ENCODE measurements at regions of chr10 and their contacts with region 1.

Region 1: GRCh38 chr10:70363971-70364771 is 18.3 kb downstream of the LRRC20 start:
- DNase-seq: peak; percentile 63 to 92 (median 85)
- ATAC-seq: peak; percentile 99
- H3K4me3 ChIP-seq: no peak overlapping the region
- H3K4me3 Mint-ChIP-seq: no peak overlapping the region
- H3K27ac ChIP-seq: no peak overlapping the region
- H3K27ac Mint-ChIP-seq: no peak overlapping the region
- H3K4me1 ChIP-seq: peaks cover 10% of the 10 kb centered on the region
- H3K4me1 Mint-ChIP-seq: peaks cover 8% of the 10 kb centered on the region
- H3K27me3 ChIP-seq: no peaks in the 10 kb centered on the region
- H3K27me3 Mint-ChIP-seq: peaks cover 2% of the 10 kb centered on the region
- CTCF ChIP-seq: peak; percentile 87

Region 2: GRCh38 chr10:70115948-70116682 is 248.1 kb before region 1 on chr10:
- CTCF ChIA-PET with region 1: interaction called, 22 read pairs
- POLR2A ChIA-PET with region 1: no interaction called
- intact Hi-C with region 1: loop called (anchors 1 to 10 kb)
- DNase-seq: peak; percentile 25 to 76 (median 63)
- ATAC-seq: peak; percentile 89
- H3K4me3 ChIP-seq: no peak overlapping the region
- H3K4me3 Mint-ChIP-seq: no peak overlapping the region
- H3K27ac ChIP-seq: no peak overlapping the region
- H3K27ac Mint-ChIP-seq: no peak overlapping the region
- H3K4me1 ChIP-seq: peaks cover 9% of the 10 kb centered on the region
- H3K4me1 Mint-ChIP-seq: peaks cover 7% of the 10 kb centered on the region
- H3K27me3 ChIP-seq: no peaks in the 10 kb centered on the region
- H3K27me3 Mint-ChIP-seq: no peaks in the 10 kb centered on the region
- CTCF ChIP-seq: peak; percentile 93

Region 3: GRCh38 chr10:70221030-70221429 is 143.1 kb before region 1 on chr10:
- CTCF ChIA-PET with region 1: interaction called, 370 read pairs
- POLR2A ChIA-PET with region 1: interaction called, 14 read pairs
- intact Hi-C with region 1: loop called (anchors 1 kb)
- DNase-seq: peak in 1 of 9 experiments; percentile 9
- ATAC-seq: no peak
- H3K4me3 ChIP-seq: no peak overlapping the region
- H3K4me3 Mint-ChIP-seq: no peak overlapping the region
- H3K27ac ChIP-seq: peak overlapping the region in 1 of 2 experiments; percentile 36
- H3K27ac Mint-ChIP-seq: peak overlapping the region; percentile 55
- H3K4me1 ChIP-seq: peaks cover 4% of the 10 kb centered on the region
- H3K4me1 Mint-ChIP-seq: peaks cover 14% of the 10 kb centered on the region
- H3K27me3 ChIP-seq: no peaks in the 10 kb centered on the region
- H3K27me3 Mint-ChIP-seq: no peaks in the 10 kb centered on the region
- CTCF ChIP-seq: no peak

Region 4: GRCh38 chr10:70260259-70260658 is 103.9 kb before region 1 on chr10:
- CTCF ChIA-PET with region 1: interaction called, 25 read pairs
- POLR2A ChIA-PET with region 1: no interaction called
- intact Hi-C with region 1: no loop called
- DNase-seq: no peak
- ATAC-seq: no peak
- H3K4me3 ChIP-seq: no peak overlapping the region
- H3K4me3 Mint-ChIP-seq: no peak overlapping the region
- H3K27ac ChIP-seq: no peak overlapping the region
- H3K27ac Mint-ChIP-seq: no peak overlapping the region
- H3K4me1 ChIP-seq: peaks cover 10% of the 10 kb centered on the region
- H3K4me1 Mint-ChIP-seq: peaks cover 9% of the 10 kb centered on the region
- H3K27me3 ChIP-seq: peaks cover 4 to 8% of the 10 kb centered on the region in 2 experiments
- H3K27me3 Mint-ChIP-seq: peaks cover 25% of the 10 kb centered on the region
- CTCF ChIP-seq: no peak

Region 5: GRCh38 chr10:70335246-70335613 is 28.9 kb before region 1 on chr10:
- CTCF ChIA-PET with region 1: interaction called, 10 read pairs
- POLR2A ChIA-PET with region 1: no interaction called
- intact Hi-C with region 1: no loop called
- DNase-seq: no peak
- ATAC-seq: no peak
- H3K4me3 ChIP-seq: no peak overlapping the region
- H3K4me3 Mint-ChIP-seq: no peak overlapping the region
- H3K27ac ChIP-seq: no peak overlapping the region
- H3K27ac Mint-ChIP-seq: no peak overlapping the region
- H3K4me1 ChIP-seq: peaks cover 12% of the 10 kb centered on the region
- H3K4me1 Mint-ChIP-seq: peaks cover 23% of the 10 kb centered on the region
- H3K27me3 ChIP-seq: no peaks in the 10 kb centered on the region
- H3K27me3 Mint-ChIP-seq: no peaks in the 10 kb centered on the region
- CTCF ChIP-seq: no peak

Region 6: GRCh38 chr10:70376436-70377378 is 12.5 kb after region 1 on chr10:
- CTCF ChIA-PET with region 1: interaction called, 45 read pairs
- POLR2A ChIA-PET with region 1: no interaction called
- intact Hi-C with region 1: no loop called
- DNase-seq: no peak
- ATAC-seq: no peak
- H3K4me3 ChIP-seq: no peak overlapping the region
- H3K4me3 Mint-ChIP-seq: no peak overlapping the region
- H3K27ac ChIP-seq: no peak overlapping the region
- H3K27ac Mint-ChIP-seq: no peak overlapping the region
- H3K4me1 ChIP-seq: peaks cover 8% of the 10 kb centered on the region
- H3K4me1 Mint-ChIP-seq: peaks cover 8% of the 10 kb centered on the region
- H3K27me3 ChIP-seq: no peaks in the 10 kb centered on the region
- H3K27me3 Mint-ChIP-seq: peaks cover 2% of the 10 kb centered on the region
- CTCF ChIP-seq: no peak

Region 7: DNA sequence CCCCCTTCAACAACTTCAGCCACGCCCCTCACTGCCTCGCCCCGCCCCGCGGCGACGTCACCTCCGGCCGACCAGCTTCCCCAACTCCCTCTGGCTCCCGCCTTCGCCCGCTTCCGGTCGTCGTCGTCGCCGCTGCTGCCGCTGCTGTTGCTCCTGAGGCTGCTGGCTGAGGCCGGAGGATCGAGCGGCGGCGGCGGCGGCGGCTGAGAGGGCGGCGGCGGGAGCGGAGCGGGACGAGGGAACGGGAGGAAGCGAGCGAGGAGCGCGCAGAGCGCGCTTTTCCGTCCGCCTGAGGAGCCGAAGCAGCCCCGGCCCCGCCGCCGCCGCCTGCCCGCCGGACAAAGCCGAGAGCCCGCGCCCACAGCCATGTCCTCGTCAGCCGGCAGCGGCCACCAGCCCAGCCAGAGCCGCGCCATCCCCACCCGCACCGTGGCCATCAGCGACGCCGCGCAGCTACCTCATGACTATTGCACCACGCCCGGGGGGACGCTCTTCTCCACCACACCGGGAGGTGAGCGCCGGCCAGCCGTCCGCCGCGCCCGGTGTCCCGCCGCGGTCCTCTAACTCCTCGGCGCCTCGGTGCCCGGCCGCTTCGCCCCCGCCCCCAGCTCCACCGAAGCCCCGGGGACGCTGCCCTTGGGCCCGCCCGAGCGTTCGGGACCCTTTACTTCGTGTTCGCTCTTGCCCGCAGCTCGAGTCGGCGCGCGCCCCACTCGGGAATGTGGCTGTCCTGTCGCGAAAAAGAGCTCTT is 40.0 kb after region 1 on chr10 and contains the start of gene EIF4EBP2:
- CTCF ChIA-PET with region 1: interaction called, 16 read pairs
- POLR2A ChIA-PET with region 1: interaction called, 3 read pairs
- intact Hi-C with region 1: no loop called
- DNase-seq: peak; percentile 95 to 100 (median 98)
- ATAC-seq: peak; percentile 97
- H3K4me3 ChIP-seq: peak within 1 kb of the TSS; percentile 63 to 77
- H3K4me3 Mint-ChIP-seq: peak within 1 kb of the TSS; percentile 97
- H3K27ac ChIP-seq: peak within 1 kb of the TSS; percentile 73 to 76
- H3K27ac Mint-ChIP-seq: peak within 1 kb of the TSS; percentile 93
- H3K4me1 ChIP-seq: peaks cover 23% of the 10 kb centered on the region
- H3K4me1 Mint-ChIP-seq: peaks cover 46% of the 10 kb centered on the region
- H3K27me3 ChIP-seq: no peaks in the 10 kb centered on the region
- H3K27me3 Mint-ChIP-seq: no peaks in the 10 kb centered on the region
- CTCF ChIP-seq: no peak
- total RNA-seq, gene EIF4EBP2: 22.4 TPM